K562 (cell line): ENCODE measurements at regions of chr2 and their contacts with region 1.

Region 1: GRCh38 chr2:188512456-188512855 is 220.8 kb downstream of the GULP1 start:
- DNase-seq: peak in 2 of 4 experiments; percentile 4 to 35
- ATAC-seq: peak; percentile 76
- H3K4me3 ChIP-seq: no peak overlapping the region
- H3K27ac ChIP-seq: no peak overlapping the region
- H3K4me1 ChIP-seq: no peaks in the 10 kb centered on the region
- H3K27me3 ChIP-seq: no peaks in the 10 kb centered on the region
- CTCF ChIP-seq: peak in 2 of 3 experiments; percentile 23 to 59; a peak in 3 of 6 replicates
- EP300 ChIP-seq: no peak
- POLR2A ChIP-seq: no peak
- RAD21 ChIP-seq: peak; percentile 72

Region 2: DNA sequence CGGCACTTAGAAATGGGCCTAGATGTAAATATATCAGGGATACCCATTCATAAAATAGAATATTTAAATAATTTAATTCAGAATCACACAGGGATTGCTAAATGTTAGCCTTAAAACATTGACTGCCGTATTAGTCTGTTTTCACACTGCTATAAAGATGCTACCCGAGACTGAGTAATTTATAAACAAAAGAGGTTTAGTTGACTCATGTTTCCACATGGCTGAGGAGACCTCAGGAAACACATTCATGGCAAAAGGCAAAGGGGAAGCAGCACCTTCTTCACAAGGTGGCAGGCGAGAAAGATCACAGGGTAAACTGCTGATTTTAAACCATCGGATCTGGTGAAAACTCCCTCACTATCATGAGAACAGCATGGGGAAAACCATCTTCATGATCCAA is 444.4 kb before region 1 on chr2:
- CTCF ChIA-PET with region 1: no interaction called
- POLR2A ChIA-PET with region 1: no interaction called
- in situ Hi-C with region 1: no loop called
- intact Hi-C with region 1: loop called (anchors 5 kb)
- DNase-seq: no peak
- ATAC-seq: no peak
- H3K4me3 ChIP-seq: no peak overlapping the region
- H3K27ac ChIP-seq: no peak overlapping the region
- H3K4me1 ChIP-seq: no peaks in the 10 kb centered on the region
- H3K27me3 ChIP-seq: no peaks in the 10 kb centered on the region
- CTCF ChIP-seq: no peak
- EP300 ChIP-seq: no peak
- POLR2A ChIP-seq: no peak
- RAD21 ChIP-seq: no peak

Region 3: DNA sequence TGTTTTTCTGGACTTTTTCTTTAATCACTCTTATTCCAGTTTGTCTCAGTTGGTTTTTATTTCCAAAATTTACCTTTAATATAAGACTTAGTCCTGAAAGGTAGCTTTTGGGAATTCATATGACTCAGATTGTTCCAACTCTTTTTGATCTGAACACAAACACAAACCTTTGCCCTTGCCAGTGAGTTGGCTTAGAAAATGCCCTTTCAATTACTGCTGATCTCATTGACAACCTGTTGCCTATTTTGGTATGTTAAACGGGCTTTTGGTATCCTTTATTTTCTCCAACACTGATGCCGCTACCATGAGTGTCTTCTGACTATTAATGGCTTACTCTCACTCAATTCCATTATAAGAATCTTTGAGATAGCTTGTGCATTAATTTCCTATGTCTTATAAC is 77.3 kb before region 1 on chr2:
- CTCF ChIA-PET with region 1: no interaction called
- POLR2A ChIA-PET with region 1: no interaction called
- in situ Hi-C with region 1: no loop called
- intact Hi-C with region 1: no loop called
- DNase-seq: no peak
- ATAC-seq: no peak
- H3K4me3 ChIP-seq: no peak overlapping the region
- H3K27ac ChIP-seq: no peak overlapping the region
- H3K4me1 ChIP-seq: peaks cover 0 to 3% of the 10 kb centered on the region in 2 experiments; a peak in 1 of 5 replicates
- H3K27me3 ChIP-seq: no peaks in the 10 kb centered on the region
- CTCF ChIP-seq: no peak
- EP300 ChIP-seq: no peak
- POLR2A ChIP-seq: no peak
- RAD21 ChIP-seq: no peak

Region 4: DNA sequence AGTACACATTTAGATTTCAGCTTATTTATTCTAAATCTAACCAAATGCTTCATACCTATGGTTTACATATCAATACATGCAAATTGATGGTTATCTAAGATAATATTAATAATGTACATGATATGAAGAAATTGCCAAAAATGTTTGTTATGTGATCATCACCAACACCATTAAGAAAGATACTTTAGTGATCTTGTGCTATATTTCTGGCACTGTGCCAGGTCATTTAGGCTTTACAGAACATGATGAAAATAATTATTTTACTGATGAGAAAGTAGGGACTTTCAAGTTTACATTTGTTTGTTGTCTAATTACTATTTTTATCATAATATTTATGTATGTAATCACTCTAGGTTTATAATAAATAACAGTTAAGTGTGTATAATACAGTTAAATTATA is 62.5 kb before region 1 on chr2:
- CTCF ChIA-PET with region 1: no interaction called
- POLR2A ChIA-PET with region 1: no interaction called
- in situ Hi-C with region 1: no loop called
- intact Hi-C with region 1: no loop called
- DNase-seq: peak in 1 of 4 experiments; percentile 2
- ATAC-seq: no peak
- H3K4me3 ChIP-seq: no peak overlapping the region
- H3K27ac ChIP-seq: no peak overlapping the region
- H3K4me1 ChIP-seq: no peaks in the 10 kb centered on the region
- H3K27me3 ChIP-seq: no peaks in the 10 kb centered on the region
- CTCF ChIP-seq: no peak
- EP300 ChIP-seq: no peak
- POLR2A ChIP-seq: no peak
- RAD21 ChIP-seq: peak in 1 of 2 experiments; percentile 15; a peak in 2 of 4 replicates